ENCODE measurements at regions of chr9 and their contacts with region 1.

Region 1: GRCh38 chr9:38346811-38347210 is 45.7 kb upstream of the ALDH1B1 start:
- DNase-seq: no peak
- ATAC-seq: no peak
- H3K4me3 ChIP-seq: no peak overlapping the region
- H3K27ac ChIP-seq: no peak overlapping the region
- H3K4me1 ChIP-seq: no peaks in the 10 kb centered on the region
- H3K27me3 ChIP-seq: peaks cover 0 to 4% (median 0%) of the 10 kb centered on the region in 9 donors
- CTCF ChIP-seq: no peak
- POLR2A ChIP-seq: no peak

Region 2: DNA sequence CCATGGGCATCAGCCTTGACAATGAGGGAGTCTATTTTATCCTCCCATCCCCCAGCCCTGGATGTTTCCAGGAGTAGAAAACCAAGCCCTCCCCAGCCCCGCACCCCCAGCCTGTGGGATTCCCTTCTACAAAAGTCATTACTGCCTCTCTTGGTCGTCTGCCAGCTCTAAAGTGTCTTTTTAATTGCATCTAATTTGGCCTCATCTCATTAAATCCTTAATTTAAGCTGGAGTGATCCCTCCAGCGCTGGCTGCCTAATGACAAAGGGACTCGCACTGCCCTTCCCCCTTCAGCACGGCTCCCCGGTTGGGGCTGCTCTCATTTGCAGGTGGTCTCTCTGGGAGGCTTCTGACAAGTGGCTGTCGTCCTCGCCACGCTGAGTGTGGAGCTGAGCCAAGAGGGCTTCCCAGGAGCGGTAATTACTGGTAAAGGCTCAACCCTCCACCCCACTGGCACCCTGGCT is 62.2 kb before region 1 on chr9:
- intact Hi-C with region 1: loop called in 1 of 10 experiments (anchors 10 kb)
- DNase-seq: no peak
- ATAC-seq: no peak
- H3K4me3 ChIP-seq: no peak overlapping the region
- H3K27ac ChIP-seq: no peak overlapping the region
- H3K4me1 ChIP-seq: no peaks in the 10 kb centered on the region
- H3K27me3 ChIP-seq: peaks cover 0 to 4% (median 0%) of the 10 kb centered on the region in 9 donors
- CTCF ChIP-seq: no peak
- POLR2A ChIP-seq: no peak

Region 3: GRCh38 chr9:38329968-38330367 is 16.8 kb before region 1 on chr9:
- intact Hi-C with region 1: no loop called
- DNase-seq: no peak
- ATAC-seq: no peak
- H3K4me3 ChIP-seq: no peak overlapping the region
- H3K27ac ChIP-seq: no peak overlapping the region
- H3K4me1 ChIP-seq: no peaks in the 10 kb centered on the region
- H3K27me3 ChIP-seq: no peaks in the 10 kb centered on the region
- CTCF ChIP-seq: no peak
- POLR2A ChIP-seq: no peak

Region 4: DNA sequence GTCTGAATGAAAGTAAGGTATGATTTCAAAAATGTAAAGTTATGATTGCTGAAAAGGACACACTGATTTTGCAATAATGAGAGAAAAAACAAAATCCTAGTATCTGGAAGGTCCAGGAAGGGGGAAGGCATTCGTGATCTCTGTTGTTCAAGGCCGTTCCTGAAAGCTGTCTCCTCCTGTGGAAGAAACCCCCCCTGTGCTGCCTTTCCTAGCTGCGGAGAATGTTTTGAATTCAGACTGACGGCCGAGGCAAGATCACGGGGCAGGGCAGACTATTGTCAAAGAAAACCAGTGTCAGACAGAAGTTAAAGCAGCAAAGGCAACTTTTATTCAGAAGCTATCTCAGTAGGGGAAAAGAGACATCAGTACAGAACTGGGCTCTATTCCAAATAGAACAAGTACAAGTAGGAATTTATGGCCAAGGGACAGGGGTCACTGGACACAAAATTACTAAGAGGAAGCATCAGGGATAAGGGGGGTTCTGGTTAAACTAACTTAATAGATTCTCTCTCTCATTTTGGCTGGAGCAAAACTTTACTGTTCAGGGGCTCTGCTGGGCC is 139.3 kb after region 1 on chr9:
- intact Hi-C with region 1: no loop called
- DNase-seq: no peak
- ATAC-seq: no peak
- H3K4me3 ChIP-seq: no peak overlapping the region
- H3K27ac ChIP-seq: no peak overlapping the region
- H3K4me1 ChIP-seq: no peaks in the 10 kb centered on the region
- H3K27me3 ChIP-seq: peaks cover 0 to 32% (median 0%) of the 10 kb centered on the region in 9 donors
- CTCF ChIP-seq: no peak
- POLR2A ChIP-seq: no peak

Measured in heart left ventricle (tissue), 16 donors.